HAP-1 (cell line): ENCODE measurements at regions of chr18 and their contacts with region 1.

Region 1: GRCh38 chr18:14086458-14087231 is 45.6 kb downstream of the ZNF519 start:
- DNase-seq: peak; percentile 57 to 65
- H3K4me3 ChIP-seq: no peak overlapping the region
- H3K4me1 ChIP-seq: no peaks in the 10 kb centered on the region
- H3K27me3 ChIP-seq: no peaks in the 10 kb centered on the region

Region 2: DNA sequence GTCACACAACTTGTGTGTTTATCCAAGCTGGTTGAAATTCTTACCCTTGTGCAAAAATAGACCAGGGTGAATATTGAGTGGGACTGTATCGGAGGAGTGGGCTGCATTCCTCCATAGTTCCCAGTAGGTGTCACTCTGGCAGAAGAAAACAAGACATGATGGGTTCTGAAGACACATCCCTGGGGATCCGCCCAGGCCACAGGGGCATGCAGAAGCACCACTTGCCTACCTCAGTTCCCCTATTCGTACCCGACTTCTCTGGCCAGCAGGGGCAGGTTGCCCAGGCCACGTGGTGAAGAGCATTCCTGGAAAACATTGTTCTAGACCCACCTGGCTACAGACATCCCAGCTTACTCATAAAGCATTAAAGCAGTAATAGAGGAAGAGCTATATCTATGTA is 528.5 kb before region 1 on chr18:
- in situ Hi-C with region 1: loop called (anchors 25 kb)
- DNase-seq: peak; percentile 21 to 52
- H3K4me3 ChIP-seq: no peak overlapping the region
- H3K4me1 ChIP-seq: no peaks in the 10 kb centered on the region
- H3K27me3 ChIP-seq: peaks cover 13% of the 10 kb centered on the region

Region 3: DNA sequence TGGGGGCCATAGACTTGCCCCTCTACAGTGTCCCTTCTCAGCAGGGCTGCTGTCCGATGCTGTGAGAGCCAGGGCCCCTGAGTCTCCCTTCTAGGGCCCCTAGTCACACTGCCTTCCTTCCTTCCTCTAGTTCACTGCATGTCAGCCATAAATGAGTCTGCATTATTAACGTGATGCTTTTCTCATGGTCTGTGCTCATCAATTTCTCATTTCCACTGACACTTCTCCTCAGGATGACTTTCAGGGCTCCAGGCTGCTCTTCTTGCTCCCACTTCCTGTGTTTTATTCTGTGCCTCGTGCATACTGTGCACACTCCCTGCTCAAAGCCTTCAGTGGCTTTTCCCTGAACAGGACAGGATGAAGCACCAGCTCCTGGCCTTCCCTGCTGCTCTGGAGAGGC is 506.8 kb before region 1 on chr18:
- in situ Hi-C with region 1: no loop called
- DNase-seq: no peak
- H3K4me3 ChIP-seq: no peak overlapping the region
- H3K4me1 ChIP-seq: no peaks in the 10 kb centered on the region
- H3K27me3 ChIP-seq: 0 out of 2 replicates have a peak, but pooled peaks cover 4% of the 10 kb centered on the region

Region 4: DNA sequence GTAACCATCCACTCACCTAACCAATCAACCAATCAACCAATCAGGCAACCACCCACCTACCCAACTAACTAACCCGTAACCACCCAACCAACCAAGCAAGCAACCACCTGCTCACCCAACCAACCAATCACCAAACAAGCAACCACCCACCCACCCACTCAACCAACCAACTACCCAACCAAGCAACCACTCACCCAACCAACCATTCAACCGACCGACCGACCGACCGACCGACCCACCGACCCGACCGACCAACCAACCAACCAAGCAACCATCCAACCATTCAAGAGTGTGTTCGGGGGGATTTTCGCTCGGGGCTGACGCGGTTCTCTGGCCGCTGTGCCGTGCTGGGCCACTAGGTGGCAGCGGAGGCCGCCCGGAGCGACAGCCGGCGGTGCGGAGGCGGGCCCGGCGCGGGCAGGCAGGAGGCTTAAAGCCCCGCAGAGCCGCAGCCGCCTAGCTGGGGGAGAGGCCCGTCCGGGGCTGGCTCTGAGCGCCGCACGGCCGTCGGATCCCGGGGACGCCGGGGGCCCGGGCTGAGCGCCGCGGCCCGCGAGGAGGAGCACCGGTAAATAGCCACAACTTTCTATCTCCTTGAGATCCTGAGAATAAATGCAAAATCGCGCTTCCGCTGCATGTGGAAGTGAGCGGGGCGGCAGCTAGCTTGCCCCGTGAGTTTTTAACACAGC is 262.8 kb before region 1 on chr18 and contains the start of gene MC5R:
- in situ Hi-C with region 1: loop called (anchors 5 kb)
- DNase-seq: peak; percentile 46 to 81
- H3K4me3 ChIP-seq: peak within 1 kb of the TSS; percentile 15
- H3K4me1 ChIP-seq: no peaks in the 10 kb centered on the region
- H3K27me3 ChIP-seq: 0 out of 2 replicates have a peak, but pooled peaks cover 3% of the 10 kb centered on the region

Region 5: DNA sequence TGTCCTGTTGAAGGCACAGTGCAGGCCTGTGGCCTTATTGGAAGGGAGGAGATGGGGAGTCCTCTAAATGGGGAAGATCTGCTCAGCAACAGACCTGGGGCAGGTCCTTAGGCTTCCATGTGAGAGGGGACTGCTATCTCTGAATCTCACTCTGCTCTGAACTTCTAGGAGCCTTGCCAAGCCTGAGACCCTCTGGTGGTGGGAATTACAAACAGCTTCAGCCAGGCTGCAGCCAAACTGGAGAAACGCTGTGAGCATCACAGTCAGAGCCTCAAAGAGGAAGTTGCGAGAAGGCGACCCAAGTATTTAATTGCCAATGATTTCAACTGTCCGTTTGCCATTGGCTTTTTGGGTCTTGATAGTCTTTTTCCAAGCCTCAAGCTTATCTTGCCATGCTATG is 104.5 kb before region 1 on chr18:
- in situ Hi-C with region 1: loop called (anchors 25 kb)
- DNase-seq: no peak
- H3K4me3 ChIP-seq: no peak overlapping the region
- H3K4me1 ChIP-seq: peaks cover 3% of the 10 kb centered on the region; the same call in 1 of the 2 replicates
- H3K27me3 ChIP-seq: no peaks in the 10 kb centered on the region